Posterior vena cava (tissue), 2 donors: ENCODE measurements at regions of chr1 and their contacts with region 1.

Region 1: DNA sequence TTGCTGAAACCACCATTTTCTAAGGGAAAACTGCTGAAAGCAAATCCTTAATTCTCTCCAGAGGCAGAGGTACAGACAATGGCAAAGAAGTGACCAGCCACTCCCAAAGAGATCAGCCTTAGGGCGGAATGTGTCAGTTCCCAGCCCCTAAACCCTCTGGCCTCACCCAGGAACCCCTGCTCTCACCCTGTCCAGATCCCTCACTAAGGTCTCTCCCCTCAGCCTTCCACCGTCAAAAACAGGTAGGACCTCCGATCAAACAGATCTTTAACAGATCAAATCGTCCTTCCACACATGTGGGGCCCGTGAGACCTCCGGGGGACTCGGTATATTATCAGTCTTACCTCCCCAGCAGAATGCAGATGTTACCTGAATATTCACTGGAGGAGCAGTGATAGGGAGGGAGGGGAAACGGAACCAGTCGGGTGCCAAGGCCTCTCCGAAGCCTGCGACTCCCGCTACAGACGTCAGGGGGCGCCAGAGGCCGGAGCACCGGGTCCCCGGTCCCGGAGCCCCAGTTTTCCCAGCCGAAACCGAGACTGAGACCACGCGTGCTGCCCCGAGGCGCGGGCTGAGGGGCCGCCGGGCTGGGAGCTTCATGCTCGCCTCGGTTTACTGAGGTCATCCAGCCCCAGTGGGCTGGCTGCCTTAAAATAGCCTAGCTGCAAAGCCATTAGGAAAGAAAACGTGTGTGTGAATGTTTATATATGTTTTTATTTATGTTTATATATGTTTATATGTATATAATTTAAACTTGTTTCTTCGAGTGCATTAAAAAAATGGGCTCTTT is 23.6 kb downstream of the GPA33 start:
- DNase-seq: peak; percentile 93

Region 2: GRCh38 chr1:167442124-167442848 is 375.8 kb after region 1 on chr1:
- intact Hi-C with region 1: loop called (anchors 5 to 10 kb)
- DNase-seq: peak; percentile 94

Region 3: DNA sequence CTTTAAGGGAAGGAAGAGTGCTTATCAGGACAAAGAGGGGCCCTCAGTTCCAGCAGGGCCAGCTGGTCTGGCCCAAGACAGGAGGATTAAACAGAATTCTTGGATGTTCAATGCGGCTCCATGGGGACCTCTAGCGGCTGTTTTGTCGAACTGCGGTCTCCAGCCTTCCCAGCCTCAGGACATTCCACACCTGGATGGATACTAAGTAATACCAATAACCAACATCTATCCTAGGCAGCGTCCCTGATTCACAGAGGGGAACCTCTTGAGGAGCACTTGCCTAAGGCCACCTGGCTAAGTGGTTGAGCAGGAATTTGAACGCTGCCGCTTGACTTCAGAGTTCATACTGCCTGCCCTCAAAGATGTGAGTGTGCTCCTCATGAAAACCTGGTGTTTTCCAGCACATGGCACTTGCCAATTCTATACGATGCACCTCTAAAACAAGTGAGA is 467.3 kb after region 1 on chr1:
- intact Hi-C with region 1: loop called in 1 of 2 experiments (anchors 10 kb)
- DNase-seq: peak; percentile 88

Region 4: GRCh38 chr1:167995038-167995437 is 928.5 kb after region 1 on chr1:
- intact Hi-C with region 1: no loop called
- DNase-seq: no peak